ENCODE measurements at regions of chr10 and their contacts with region 1.

Region 1: GRCh38 chr10:51010977-51011376 is 63.3 kb upstream of the PRKG1 start:
- DNase-seq: no peak
- ATAC-seq: peak; percentile 53 to 57
- H3K4me3 ChIP-seq: no peak overlapping the region
- H3K27ac ChIP-seq: no peak overlapping the region
- H3K4me1 ChIP-seq: peaks cover 3% of the 10 kb centered on the region
- H3K27me3 ChIP-seq: no peaks in the 10 kb centered on the region

Region 2: GRCh38 chr10:50946991-50947781 is 63.8 kb before region 1 on chr10:
- intact Hi-C with region 1: no loop called
- DNase-seq: no peak
- ATAC-seq: no peak
- H3K4me3 ChIP-seq: no peak overlapping the region
- H3K27ac ChIP-seq: no peak overlapping the region
- H3K4me1 ChIP-seq: no peaks in the 10 kb centered on the region
- H3K27me3 ChIP-seq: no peaks in the 10 kb centered on the region

Region 3: GRCh38 chr10:51047857-51048256 is 36.9 kb after region 1 on chr10:
- intact Hi-C with region 1: loop called in 1 of 4 experiments (anchors 5 kb)
- DNase-seq: no peak
- ATAC-seq: peak; percentile 63 to 77
- H3K4me3 ChIP-seq: no peak overlapping the region
- H3K27ac ChIP-seq: no peak overlapping the region
- H3K4me1 ChIP-seq: peaks cover 1% of the 10 kb centered on the region
- H3K27me3 ChIP-seq: no peaks in the 10 kb centered on the region